ENCODE measurements at regions of chr15 and their contacts with region 1.

Region 1: GRCh38 chr15:57220205-57220604 is 156.1 kb upstream of the CGNL1 start:
- DNase-seq: no peak
- ATAC-seq: no peak
- H3K4me3 ChIP-seq: no peak overlapping the region
- H3K27ac ChIP-seq: no peak overlapping the region
- H3K4me1 ChIP-seq: peaks cover 27% of the 10 kb centered on the region
- H3K27me3 ChIP-seq: no peaks in the 10 kb centered on the region
- CTCF ChIP-seq: no peak

Region 2: DNA sequence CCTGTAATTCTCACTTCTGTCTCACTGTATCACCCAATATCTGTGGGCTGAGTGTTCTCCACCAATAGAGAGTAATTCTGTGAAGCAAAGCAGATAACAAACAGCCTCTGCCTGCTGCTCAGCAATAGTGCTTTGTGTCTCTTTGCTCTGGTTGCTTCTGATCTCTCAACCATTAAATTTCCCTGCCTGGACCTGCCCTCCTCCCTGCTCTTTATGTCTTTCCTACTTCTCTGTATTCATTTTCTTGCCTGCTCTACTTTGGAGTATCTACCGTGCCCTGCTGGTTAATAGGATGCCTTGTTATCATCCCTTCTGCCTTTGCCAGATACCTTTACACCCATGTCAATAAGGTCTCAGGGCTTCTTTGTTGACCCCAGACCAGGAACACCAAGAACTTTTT is 53.2 kb after region 1 on chr15:
- intact Hi-C with region 1: loop called in 1 of 2 experiments (anchors 10 kb)
- DNase-seq: no peak
- ATAC-seq: no peak
- H3K4me3 ChIP-seq: no peak overlapping the region
- H3K27ac ChIP-seq: no peak overlapping the region
- H3K4me1 ChIP-seq: no peaks in the 10 kb centered on the region
- H3K27me3 ChIP-seq: no peaks in the 10 kb centered on the region
- CTCF ChIP-seq: no peak